CD8-positive, alpha-beta memory T cell (primary cell): ENCODE measurements at regions of chr2 and their contacts with region 1.

Region 1: DNA sequence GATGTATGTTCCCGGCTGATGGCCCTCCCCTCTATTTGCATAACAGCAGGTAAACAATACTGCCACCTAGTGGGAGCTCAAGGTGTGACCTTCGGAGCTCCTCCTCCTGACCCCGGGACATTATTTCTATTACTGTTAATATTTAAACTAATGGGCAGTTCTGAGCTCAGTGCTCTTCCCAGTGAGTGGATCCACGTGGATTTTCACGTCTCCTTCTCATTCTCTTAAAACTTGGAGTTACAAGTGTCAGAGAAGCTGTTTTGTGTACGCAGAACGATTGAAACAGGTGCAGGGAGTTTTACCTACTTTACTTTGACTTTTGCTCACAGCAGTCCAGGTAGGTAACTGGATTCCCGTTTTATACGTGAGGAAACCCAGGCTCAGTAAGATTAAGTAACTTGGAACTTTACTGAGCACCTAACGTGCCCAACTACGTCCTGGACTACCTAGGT is 127.3 kb downstream of the PRKCE start:
- DNase-seq: peak; percentile 51 to 79 (median 65)
- H3K4me3 ChIP-seq: no peak overlapping the region
- H3K4me3 Mint-ChIP-seq: peak overlapping the region in 6 of 7 donors; percentile 52 to 88 (median 64)
- H3K27ac ChIP-seq: no peak overlapping the region
- H3K27ac Mint-ChIP-seq: peak overlapping the region in 2 of 8 donors; percentile 60
- H3K4me1 ChIP-seq: peaks cover 7% of the 10 kb centered on the region
- H3K4me1 Mint-ChIP-seq: peaks cover 6% of the 10 kb centered on the region in 3 donors
- H3K27me3 ChIP-seq: no peaks in the 10 kb centered on the region
- H3K27me3 Mint-ChIP-seq: peaks cover 0 to 2% of the 10 kb centered on the region in 2 donors

Region 2: DNA sequence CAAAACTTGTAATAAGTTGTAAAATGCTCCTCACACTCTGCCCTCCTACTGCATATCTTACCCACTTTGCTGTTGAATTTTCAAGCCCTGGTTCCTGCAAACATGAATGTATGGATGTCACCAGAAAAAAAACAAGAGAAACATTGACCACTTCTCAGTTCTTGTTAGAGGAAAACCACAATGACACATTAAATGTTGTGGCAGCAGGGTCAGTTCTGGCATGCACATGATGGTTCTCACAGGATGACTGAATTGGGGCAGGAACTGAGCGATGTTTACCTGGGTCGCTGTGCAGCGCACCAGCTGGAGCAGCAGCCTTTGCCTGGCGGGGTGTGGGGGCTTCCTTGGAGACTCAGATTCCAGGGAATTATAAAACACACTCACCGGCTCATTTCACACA is 141.3 kb before region 1 on chr2:
- CTCF ChIA-PET with region 1: interaction called, 62 read pairs
- POLR2A ChIA-PET with region 1: no interaction called
- DNase-seq: no peak
- H3K4me3 ChIP-seq: no peak overlapping the region
- H3K4me3 Mint-ChIP-seq: no peak overlapping the region
- H3K27ac ChIP-seq: no peak overlapping the region
- H3K27ac Mint-ChIP-seq: no peak overlapping the region
- H3K4me1 ChIP-seq: no peaks in the 10 kb centered on the region
- H3K4me1 Mint-ChIP-seq: no peaks in the 10 kb centered on the region
- H3K27me3 ChIP-seq: no peaks in the 10 kb centered on the region
- H3K27me3 Mint-ChIP-seq: peaks cover 15 to 65% of the 10 kb centered on the region in 2 donors

Region 3: DNA sequence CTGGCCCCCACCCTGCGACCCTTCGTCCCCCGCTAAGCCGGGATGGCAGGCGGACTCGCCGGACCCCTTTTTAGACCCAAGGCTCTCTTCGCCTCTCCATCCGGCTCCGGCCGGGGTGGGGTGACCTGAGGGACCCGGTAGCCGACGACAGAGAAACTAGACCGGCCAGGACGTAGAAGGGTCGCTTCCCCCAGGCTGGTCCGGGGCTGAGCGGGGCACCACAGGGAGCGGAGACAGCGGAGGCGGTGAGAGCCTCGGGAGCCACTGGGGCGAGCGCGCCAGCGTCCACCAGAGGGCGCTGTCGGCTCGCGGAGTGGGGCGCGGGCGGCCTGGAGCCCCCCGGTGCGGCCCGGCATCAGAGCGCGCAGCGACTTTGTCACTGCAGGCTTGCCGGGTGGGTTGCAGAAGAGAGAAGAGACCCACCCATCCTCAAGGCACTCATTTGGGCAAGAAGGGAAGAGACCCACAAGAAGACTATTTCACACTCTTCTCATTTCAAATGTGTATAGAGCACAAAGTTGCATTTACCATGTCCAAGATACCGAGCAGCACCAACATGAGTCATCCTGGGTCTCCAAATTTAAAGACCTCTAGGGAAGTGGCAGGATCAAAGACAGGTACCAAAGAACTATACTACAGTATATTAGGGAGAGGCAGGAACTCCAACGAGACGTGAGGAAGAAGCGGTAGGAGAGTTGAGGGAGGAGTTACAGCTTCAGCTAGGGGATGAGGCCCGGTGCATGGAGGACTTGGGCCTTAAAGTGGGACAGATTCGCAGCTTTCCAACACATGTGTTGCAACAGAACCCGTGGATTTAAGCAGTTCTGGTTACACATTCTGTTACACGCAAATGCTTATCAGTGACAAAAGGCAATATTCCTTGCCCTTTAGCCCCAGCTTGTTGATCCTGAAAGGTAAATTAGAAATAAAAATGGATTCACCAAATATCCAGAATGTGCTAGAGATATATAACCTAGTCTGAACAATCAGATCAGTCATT is 134.9 kb before region 1 on chr2:
- CTCF ChIA-PET with region 1: interaction called, 62 read pairs
- POLR2A ChIA-PET with region 1: no interaction called
- DNase-seq: peak; percentile 64 to 76 (median 67)
- H3K4me3 ChIP-seq: no peak overlapping the region
- H3K4me3 Mint-ChIP-seq: peak overlapping the region in 6 of 7 donors; percentile 30 to 75 (median 56)
- H3K27ac ChIP-seq: no peak overlapping the region
- H3K27ac Mint-ChIP-seq: peak overlapping the region in 1 of 8 donors; percentile 20
- H3K4me1 ChIP-seq: peaks cover 9% of the 10 kb centered on the region
- H3K4me1 Mint-ChIP-seq: peaks cover 0 to 12% (median 1%) of the 10 kb centered on the region in 3 donors
- H3K27me3 ChIP-seq: peaks cover 13% of the 10 kb centered on the region
- H3K27me3 Mint-ChIP-seq: peaks cover 8 to 26% of the 10 kb centered on the region in 2 donors

Region 4: DNA sequence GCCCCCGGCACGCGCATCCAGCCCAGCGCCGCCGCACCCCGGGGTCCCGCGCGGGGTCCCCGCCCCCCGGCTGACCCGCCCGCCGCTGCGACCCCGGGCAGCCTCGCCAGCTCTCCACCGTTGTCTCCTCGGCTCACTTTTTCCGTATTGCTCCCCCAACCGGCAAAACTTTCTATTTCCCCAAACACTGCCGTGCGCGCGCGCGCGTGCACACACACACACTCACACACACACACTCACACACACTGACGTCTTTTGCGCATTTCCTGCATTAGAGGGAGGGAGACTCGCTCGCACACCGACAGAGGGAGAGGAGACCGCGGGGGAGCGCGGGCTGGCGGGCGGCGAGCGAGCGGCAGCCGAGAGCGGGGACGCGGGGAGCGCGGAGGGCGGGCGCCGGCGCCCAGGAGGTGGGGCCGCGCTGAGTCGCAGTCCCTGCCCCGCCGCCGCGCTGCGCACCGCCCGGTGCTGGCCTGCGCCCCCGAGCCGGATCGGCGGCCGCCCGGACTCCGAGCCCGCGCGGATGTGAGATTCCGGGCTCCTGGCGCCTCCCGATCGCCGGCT is 127.8 kb before region 1 on chr2:
- CTCF ChIA-PET with region 1: interaction called, 17 read pairs
- POLR2A ChIA-PET with region 1: interaction called, 4 read pairs
- DNase-seq: peak; percentile 89 to 97 (median 95)
- H3K4me3 ChIP-seq: peak overlapping the region; percentile 78
- H3K4me3 Mint-ChIP-seq: peak overlapping the region; percentile 92 to 96 (median 95)
- H3K27ac ChIP-seq: peak overlapping the region; percentile 63
- H3K27ac Mint-ChIP-seq: peak overlapping the region; percentile 72 to 97 (median 94)
- H3K4me1 ChIP-seq: no peaks in the 10 kb centered on the region
- H3K4me1 Mint-ChIP-seq: peaks cover 33 to 43% (median 38%) of the 10 kb centered on the region in 3 donors
- H3K27me3 ChIP-seq: no peaks in the 10 kb centered on the region
- H3K27me3 Mint-ChIP-seq: peaks cover 0 to 7% of the 10 kb centered on the region in 2 donors

Region 5: DNA sequence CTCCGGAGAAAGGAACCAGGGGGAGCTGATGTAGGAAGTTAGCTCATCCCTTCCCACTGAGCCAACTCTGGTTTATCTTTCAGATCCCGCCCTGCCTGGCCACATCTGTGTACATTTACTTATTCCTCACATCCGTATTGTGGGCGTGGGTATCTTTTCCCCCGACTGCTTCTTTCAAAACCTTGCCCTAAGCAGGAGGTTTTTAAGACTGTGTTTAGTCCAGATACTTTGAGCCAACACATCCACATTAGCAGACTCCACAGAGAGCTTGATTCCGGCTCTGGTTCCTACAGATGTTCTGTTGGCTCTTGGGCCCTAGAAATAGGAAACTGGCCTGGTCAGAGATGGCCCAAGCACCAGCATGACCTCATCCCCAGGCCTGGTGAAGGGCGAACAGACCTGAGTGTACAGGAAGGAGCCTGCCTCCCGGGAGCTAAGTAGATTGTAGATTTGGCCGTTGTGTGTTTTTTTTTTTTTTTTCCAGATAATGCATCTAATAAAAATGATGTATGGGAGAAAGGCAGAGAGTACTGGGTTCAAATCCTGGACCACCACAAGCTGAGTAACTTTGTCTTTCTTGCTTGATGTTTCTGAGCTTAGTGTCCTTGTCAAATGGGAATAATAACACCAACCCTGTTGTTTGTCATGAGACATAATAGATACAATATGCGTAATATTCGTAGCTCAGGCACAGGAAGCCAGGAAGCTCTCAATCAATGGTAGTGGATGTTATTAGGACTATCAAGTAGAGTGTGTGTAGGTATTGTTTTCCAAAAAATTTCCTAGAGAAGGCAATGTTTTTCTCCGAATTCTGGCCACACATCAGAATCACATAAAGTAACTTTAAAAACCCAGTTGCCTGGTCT is 35.0 kb before region 1 on chr2:
- CTCF ChIA-PET with region 1: no interaction called
- POLR2A ChIA-PET with region 1: no interaction called
- DNase-seq: no peak
- H3K4me3 ChIP-seq: no peak overlapping the region
- H3K4me3 Mint-ChIP-seq: no peak overlapping the region
- H3K27ac ChIP-seq: no peak overlapping the region
- H3K27ac Mint-ChIP-seq: peak overlapping the region in 1 of 8 donors; percentile 16
- H3K4me1 ChIP-seq: no peaks in the 10 kb centered on the region
- H3K4me1 Mint-ChIP-seq: peaks cover 4 to 11% (median 9%) of the 10 kb centered on the region in 3 donors
- H3K27me3 ChIP-seq: no peaks in the 10 kb centered on the region
- H3K27me3 Mint-ChIP-seq: no peaks in the 10 kb centered on the region

Region 6: DNA sequence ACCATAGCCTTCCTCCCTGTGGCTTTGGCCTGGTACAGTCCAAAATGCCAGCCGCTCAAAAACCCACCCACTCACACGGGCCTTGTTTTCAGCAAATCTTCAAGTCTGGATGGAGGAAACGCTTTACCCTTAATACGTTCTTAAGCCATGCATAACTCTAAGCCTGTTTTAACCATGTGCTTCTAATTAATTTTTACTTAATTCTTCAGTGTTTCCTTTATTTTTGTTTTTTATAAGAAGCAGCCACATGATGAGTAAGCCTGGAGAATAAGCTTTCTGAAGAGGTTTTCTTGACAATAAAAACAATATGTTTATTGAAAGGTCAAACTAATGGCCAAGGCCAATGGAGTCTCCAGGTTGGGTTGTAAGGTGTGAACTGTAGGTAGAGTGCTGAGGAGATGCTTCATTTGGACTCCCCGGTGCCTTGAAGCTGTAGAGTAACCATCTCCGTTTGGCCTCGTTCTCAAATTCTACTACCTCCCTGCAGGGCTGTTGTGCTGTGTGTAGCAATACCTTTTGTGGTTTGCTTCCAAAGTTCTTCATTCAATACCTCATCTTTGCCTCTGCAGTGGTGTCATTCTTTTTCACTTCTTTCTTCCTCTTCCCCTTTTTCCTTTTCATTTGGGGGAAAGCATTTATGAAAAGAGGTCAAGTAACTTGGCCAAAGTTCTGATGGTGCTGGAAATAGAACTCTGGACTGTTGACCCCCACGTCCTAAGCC is 13.6 kb before region 1 on chr2:
- CTCF ChIA-PET with region 1: interaction called, 14 read pairs
- POLR2A ChIA-PET with region 1: no interaction called
- DNase-seq: no peak
- H3K4me3 ChIP-seq: no peak overlapping the region
- H3K4me3 Mint-ChIP-seq: no peak overlapping the region
- H3K27ac ChIP-seq: no peak overlapping the region
- H3K27ac Mint-ChIP-seq: no peak overlapping the region
- H3K4me1 ChIP-seq: no peaks in the 10 kb centered on the region
- H3K4me1 Mint-ChIP-seq: no peaks in the 10 kb centered on the region
- H3K27me3 ChIP-seq: no peaks in the 10 kb centered on the region
- H3K27me3 Mint-ChIP-seq: no peaks in the 10 kb centered on the region

Region 7: DNA sequence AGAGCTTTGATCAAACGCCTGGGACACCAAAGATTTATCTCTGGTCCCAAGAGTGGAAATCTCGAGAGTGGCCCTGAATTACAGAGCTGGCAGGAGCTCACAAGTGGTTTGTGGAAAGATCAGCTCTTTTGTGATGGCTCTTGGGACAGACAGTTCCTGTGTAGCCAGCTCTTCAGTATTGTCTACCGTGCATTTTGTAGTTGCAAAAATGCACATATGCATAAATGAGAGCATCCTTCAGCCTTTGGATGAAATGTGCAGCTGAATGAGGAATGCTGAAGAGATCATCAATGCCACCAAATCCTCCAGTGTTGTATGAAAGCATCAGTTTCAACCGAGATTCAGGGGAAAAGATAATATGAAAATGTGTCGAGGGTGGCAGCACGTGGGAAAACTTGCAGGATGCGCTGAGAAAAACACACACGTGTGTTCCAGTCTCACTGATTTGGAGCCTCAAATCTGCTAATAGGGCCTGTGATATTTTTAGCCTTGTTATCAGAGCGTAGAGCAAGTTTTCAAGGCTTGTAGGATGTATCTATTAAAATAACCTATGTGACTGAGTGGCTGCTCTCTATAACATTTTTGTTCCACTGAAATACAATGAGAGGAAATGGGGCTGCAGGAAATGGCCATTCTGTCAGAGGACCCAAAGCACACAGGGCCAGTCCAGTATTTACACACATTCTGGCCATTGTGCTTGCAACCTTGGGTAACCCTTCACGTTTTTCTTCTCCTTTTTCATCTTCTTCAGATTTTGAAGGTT is 11.4 kb after region 1 on chr2:
- CTCF ChIA-PET with region 1: interaction called, 18 read pairs
- POLR2A ChIA-PET with region 1: no interaction called
- DNase-seq: no peak
- H3K4me3 ChIP-seq: no peak overlapping the region
- H3K4me3 Mint-ChIP-seq: no peak overlapping the region
- H3K27ac ChIP-seq: no peak overlapping the region
- H3K27ac Mint-ChIP-seq: no peak overlapping the region
- H3K4me1 ChIP-seq: no peaks in the 10 kb centered on the region
- H3K4me1 Mint-ChIP-seq: peaks cover 1 to 7% (median 3%) of the 10 kb centered on the region in 3 donors
- H3K27me3 ChIP-seq: no peaks in the 10 kb centered on the region
- H3K27me3 Mint-ChIP-seq: no peaks in the 10 kb centered on the region

Region 8: GRCh38 chr2:45797451-45798230 is 18.9 kb after region 1 on chr2:
- CTCF ChIA-PET with region 1: interaction called, 17 read pairs
- POLR2A ChIA-PET with region 1: no interaction called
- DNase-seq: no peak
- H3K4me3 ChIP-seq: no peak overlapping the region
- H3K4me3 Mint-ChIP-seq: peak overlapping the region in 1 of 7 donors; percentile 7
- H3K27ac ChIP-seq: no peak overlapping the region
- H3K27ac Mint-ChIP-seq: peak overlapping the region in 1 of 8 donors; percentile 25
- H3K4me1 ChIP-seq: no peaks in the 10 kb centered on the region
- H3K4me1 Mint-ChIP-seq: peaks cover 4 to 7% (median 5%) of the 10 kb centered on the region in 3 donors
- H3K27me3 ChIP-seq: no peaks in the 10 kb centered on the region
- H3K27me3 Mint-ChIP-seq: peaks cover 0 to 1% of the 10 kb centered on the region in 2 donors